ENCODE measurements at regions of chr6 and their contacts with region 1.

Region 1: DNA sequence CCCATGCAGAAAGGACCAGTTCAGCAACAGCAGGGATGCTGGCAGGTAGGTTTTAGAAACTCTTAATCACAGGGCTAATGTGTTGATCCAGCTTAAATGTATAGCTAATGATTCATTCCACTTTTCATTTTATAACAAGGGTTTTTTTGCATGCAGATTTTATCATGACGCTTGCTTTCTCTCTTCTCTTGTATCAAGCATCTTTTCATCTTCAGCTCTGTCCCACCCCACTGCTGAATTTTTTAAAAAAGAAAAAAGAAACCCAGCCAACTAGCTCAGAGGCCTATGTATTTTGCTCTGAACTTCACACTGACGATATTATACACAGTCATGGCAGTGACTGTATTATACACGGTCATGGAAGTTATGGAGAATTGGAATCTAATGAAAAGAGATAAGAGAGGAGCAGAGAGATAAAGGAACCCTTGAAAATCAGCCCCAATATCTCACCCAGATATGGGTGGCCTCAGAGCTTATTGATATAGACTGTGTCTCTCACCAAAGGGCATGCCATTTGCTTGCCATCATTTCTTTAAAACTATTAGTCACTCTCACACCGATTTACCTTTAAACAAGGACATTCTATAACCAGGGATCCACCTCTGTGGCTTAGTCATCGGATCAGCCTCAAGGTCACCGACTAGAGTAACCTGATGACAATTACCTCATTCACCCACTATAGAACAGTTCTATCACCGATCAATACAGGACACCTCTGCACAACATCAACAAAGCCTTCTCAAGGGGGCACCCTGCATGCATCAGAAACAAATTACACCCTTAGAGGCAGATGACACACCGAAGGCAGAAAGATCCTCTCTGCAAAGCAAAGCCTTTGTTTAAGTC is 222.0 kb downstream of the ATXN1 start:
- DNase-seq: peak; percentile 96
- ATAC-seq: peak; percentile 94
- H3K4me3 ChIP-seq: no peak overlapping the region
- H3K27ac ChIP-seq: peak overlapping the region; percentile 70
- H3K4me1 ChIP-seq: peaks cover 26% of the 10 kb centered on the region
- H3K27me3 ChIP-seq: no peaks in the 10 kb centered on the region
- CTCF ChIP-seq: peak; percentile 68
- EP300 ChIP-seq: peak; percentile 69 to 87; a peak in 3 of 4 replicates
- POLR2A ChIP-seq: no peak
- RAD21 ChIP-seq: no peak

Region 2: DNA sequence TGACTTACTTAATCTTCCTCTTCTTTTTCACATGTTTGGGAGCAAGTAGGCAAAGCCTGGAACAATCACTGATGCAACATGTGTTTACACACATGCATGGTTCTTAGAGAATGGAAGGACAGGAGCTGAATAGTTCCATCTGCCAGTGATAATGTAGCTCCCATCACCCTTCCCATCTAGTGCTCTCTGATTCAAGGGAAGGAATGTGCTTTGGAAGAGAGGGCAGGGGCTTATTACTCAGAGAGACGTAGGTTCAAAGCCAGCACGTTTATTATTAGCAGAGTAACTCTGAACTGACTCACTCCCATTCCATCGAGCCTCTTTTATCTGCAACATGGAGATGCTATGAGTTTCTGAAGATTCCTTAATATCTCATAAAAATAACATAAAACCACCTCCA is 89.0 kb before region 1 on chr6:
- CTCF ChIA-PET with region 1: no interaction called
- POLR2A ChIA-PET with region 1: no interaction called
- in situ Hi-C with region 1: no loop called
- intact Hi-C with region 1: no loop called
- DNase-seq: no peak
- ATAC-seq: no peak
- H3K4me3 ChIP-seq: no peak overlapping the region
- H3K27ac ChIP-seq: no peak overlapping the region
- H3K4me1 ChIP-seq: peaks cover 16% of the 10 kb centered on the region
- H3K27me3 ChIP-seq: no peaks in the 10 kb centered on the region
- CTCF ChIP-seq: no peak
- EP300 ChIP-seq: no peak
- POLR2A ChIP-seq: no peak
- RAD21 ChIP-seq: no peak

Region 3: DNA sequence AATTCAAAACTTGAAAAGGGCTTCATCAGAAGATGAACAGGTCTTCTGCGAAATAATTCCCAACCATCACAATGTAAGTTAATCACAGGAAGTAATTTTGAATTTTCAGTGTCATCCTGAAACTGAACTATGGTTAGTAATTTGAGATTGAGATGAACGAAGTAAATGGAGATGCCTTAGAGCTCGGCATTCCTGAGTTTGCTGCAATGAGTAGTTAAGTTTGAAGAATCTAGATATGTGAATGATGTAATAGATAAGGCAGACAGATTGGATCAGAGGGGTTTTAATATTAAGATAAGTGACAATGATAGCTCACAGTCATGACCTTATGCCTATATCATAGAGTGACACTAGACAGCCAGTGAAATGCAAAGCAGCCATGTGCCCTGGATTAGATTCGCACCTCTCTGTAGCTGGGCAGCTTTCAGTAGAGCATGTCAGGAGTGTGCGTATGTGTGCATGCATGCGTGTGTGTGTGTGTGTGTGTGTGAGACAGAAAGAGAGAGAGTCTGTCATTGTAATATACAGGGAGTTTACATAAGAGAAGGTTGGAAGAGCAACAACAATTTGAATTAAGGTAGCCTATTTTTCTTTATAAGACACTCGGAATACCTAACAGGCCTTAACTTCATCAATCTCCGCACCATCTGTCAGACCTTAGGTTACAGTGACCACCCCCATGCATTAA is 67.9 kb before region 1 on chr6:
- CTCF ChIA-PET with region 1: no interaction called
- POLR2A ChIA-PET with region 1: no interaction called
- in situ Hi-C with region 1: no loop called
- intact Hi-C with region 1: no loop called
- DNase-seq: no peak
- ATAC-seq: no peak
- H3K4me3 ChIP-seq: no peak overlapping the region
- H3K27ac ChIP-seq: no peak overlapping the region
- H3K4me1 ChIP-seq: peaks cover 16% of the 10 kb centered on the region
- H3K27me3 ChIP-seq: no peaks in the 10 kb centered on the region
- CTCF ChIP-seq: no peak
- EP300 ChIP-seq: no peak
- POLR2A ChIP-seq: no peak
- RAD21 ChIP-seq: no peak

Region 4: GRCh38 chr6:16585805-16586204 is 46.5 kb after region 1 on chr6:
- CTCF ChIA-PET with region 1: no interaction called
- POLR2A ChIA-PET with region 1: interaction called, 3 read pairs
- in situ Hi-C with region 1: no loop called
- intact Hi-C with region 1: loop called (anchors 2 kb)
- DNase-seq: no peak
- ATAC-seq: peak; percentile 57
- H3K4me3 ChIP-seq: peak overlapping the region in 1 of 3 experiments; percentile 5; a peak in 1 of 6 replicates
- H3K27ac ChIP-seq: peak overlapping the region; percentile 68
- H3K4me1 ChIP-seq: peaks cover 36% of the 10 kb centered on the region
- H3K27me3 ChIP-seq: no peaks in the 10 kb centered on the region
- CTCF ChIP-seq: no peak
- EP300 ChIP-seq: no peak
- POLR2A ChIP-seq: no peak
- RAD21 ChIP-seq: no peak